HCT116 (cell line): ENCODE measurements at regions of chr18 and their contacts with region 1.

Region 1: DNA sequence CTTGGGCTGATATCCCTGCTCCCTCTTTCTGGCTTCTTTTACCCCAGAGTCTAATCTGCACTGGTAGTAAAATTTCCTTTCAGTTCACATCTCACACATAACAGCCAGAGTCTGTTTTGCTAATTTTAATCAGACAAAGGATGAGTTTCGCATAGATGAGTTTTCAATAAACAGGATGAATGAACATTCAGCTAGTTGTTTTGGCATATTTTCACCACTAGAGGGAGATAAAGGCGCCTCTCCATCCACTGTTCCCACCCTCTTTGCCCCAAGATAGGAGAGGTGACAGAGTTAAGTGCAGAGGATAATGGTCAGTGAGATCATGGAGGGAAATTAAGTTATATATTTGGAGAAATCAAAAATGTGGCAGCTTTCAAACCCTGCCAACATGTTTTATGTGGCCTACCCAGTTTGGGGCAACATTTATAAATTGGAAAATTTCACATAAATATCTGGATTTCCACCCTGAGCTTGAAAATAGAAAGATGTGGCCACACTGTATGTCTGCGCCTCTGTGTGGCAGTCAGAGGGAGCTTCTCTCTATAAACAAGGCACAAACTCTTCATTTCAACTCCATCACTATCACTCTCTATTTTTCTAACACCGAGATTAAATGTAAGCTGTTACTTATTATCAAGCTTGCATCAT is 48.5 kb upstream of the DTNA start:
- DNase-seq: peak; percentile 33
- ATAC-seq: peak; percentile 83
- H3K4me3 ChIP-seq: no peak overlapping the region
- H3K27ac ChIP-seq: no peak overlapping the region
- H3K4me1 ChIP-seq: peaks cover 9 to 14% of the 10 kb centered on the region in 2 experiments
- H3K27me3 ChIP-seq: no peaks in the 10 kb centered on the region
- CTCF ChIP-seq: peak; percentile 58 to 90 (median 83); a peak in 5 of 6 replicates
- POLR2A ChIP-seq: no peak
- RAD21 ChIP-seq: peak; percentile 62

Region 2: GRCh38 chr18:34647251-34647650 is 14.3 kb before region 1 on chr18:
- CTCF ChIA-PET with region 1: interaction called, 25 read pairs
- POLR2A ChIA-PET with region 1: no interaction called
- RAD21 ChIA-PET with region 1: no interaction called
- intact Hi-C with region 1: no loop called
- DNase-seq: peak; percentile 23
- ATAC-seq: peak; percentile 78
- H3K4me3 ChIP-seq: no peak overlapping the region
- H3K27ac ChIP-seq: no peak overlapping the region
- H3K4me1 ChIP-seq: peaks cover 5 to 22% of the 10 kb centered on the region in 2 experiments; a peak in 3 of 4 replicates
- H3K27me3 ChIP-seq: no peaks in the 10 kb centered on the region
- CTCF ChIP-seq: 0 out of 6 replicates have a peak, but pooled peaks of 1 of the 3 experiments have one; percentile 18
- POLR2A ChIP-seq: no peak
- RAD21 ChIP-seq: no peak

Region 3: DNA sequence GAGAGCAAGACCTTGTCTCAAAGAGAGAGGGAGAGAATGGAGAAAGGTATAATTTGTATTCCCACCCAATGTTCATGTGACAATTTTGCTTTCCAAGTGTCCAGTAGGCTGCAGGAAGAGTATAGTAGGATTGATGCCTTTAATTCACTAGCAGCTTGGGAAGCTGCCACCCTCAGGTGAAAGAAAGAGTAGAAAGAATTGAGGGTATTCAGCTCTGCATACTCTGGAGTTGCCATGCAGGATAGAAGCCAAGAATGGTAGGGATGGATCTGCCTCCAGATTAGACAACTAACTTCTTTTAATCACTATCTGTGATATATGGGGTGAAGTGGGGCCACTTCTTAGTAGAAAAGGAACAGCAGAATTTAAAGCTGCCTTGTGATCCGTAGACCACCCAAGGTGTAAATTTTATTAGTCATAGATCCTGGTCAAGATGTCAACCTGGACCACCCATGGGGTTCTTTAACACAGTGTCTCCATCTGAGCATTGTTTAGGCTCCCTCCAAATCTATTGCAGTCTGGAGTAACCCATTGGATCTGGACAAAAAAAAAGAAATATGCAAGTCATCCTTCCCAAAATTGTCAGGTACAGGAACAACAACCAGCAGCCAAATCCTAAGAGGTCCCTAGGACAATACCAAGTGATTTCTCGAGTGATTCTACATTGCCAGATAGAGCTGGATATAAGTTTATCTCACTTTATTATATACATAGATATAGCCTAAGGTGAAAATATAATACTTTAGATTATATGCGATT is 15.4 kb after region 1 on chr18:
- CTCF ChIA-PET with region 1: interaction called, 22 read pairs
- POLR2A ChIA-PET with region 1: no interaction called
- RAD21 ChIA-PET with region 1: no interaction called
- intact Hi-C with region 1: no loop called
- DNase-seq: no peak
- ATAC-seq: no peak
- H3K4me3 ChIP-seq: no peak overlapping the region
- H3K27ac ChIP-seq: no peak overlapping the region
- H3K4me1 ChIP-seq: no peaks in the 10 kb centered on the region
- H3K27me3 ChIP-seq: no peaks in the 10 kb centered on the region
- CTCF ChIP-seq: no peak
- POLR2A ChIP-seq: no peak
- RAD21 ChIP-seq: no peak

Region 4: DNA sequence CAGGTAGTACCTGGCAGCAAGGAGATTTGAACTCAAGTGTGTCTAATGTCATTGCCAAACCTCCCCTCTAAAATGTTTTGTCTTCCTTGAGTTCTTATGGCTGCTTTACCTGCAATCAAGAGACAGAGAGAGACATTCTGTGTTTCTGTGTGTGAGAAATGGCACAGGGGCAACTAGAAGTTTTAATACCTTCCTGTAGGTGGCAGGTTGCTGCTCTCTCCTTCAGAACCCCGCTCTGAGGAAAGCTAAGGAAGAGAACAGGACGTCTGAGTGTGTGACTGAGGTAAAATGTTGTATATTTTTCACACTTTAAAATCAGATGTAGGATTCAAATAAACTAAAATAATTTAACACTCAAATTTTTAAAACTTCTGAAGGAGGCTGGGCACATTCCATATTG is 67.7 kb after region 1 on chr18:
- CTCF ChIA-PET with region 1: interaction called, 12 read pairs
- POLR2A ChIA-PET with region 1: no interaction called
- RAD21 ChIA-PET with region 1: no interaction called
- intact Hi-C with region 1: no loop called
- DNase-seq: peak; percentile 29
- ATAC-seq: peak; percentile 98
- H3K4me3 ChIP-seq: no peak overlapping the region
- H3K27ac ChIP-seq: no peak overlapping the region
- H3K4me1 ChIP-seq: peaks cover 0 to 7% of the 10 kb centered on the region in 2 experiments; a peak in 1 of 4 replicates
- H3K27me3 ChIP-seq: no peaks in the 10 kb centered on the region
- CTCF ChIP-seq: peak; percentile 22 to 75 (median 72); a peak in 4 of 6 replicates
- POLR2A ChIP-seq: no peak
- RAD21 ChIP-seq: peak; percentile 25; the same call in 1 of the 2 replicates

Region 5: GRCh38 chr18:34787931-34788532 is 126.4 kb after region 1 on chr18:
- CTCF ChIA-PET with region 1: interaction called, 29 read pairs
- POLR2A ChIA-PET with region 1: no interaction called
- RAD21 ChIA-PET with region 1: interaction called in 1 of 2 experiments, 4 read pairs
- intact Hi-C with region 1: loop called (anchors 1 kb)
- DNase-seq: peak; percentile 59
- ATAC-seq: peak; percentile 87
- H3K4me3 ChIP-seq: no peak overlapping the region
- H3K27ac ChIP-seq: no peak overlapping the region
- H3K4me1 ChIP-seq: no peaks in the 10 kb centered on the region
- H3K27me3 ChIP-seq: no peaks in the 10 kb centered on the region
- CTCF ChIP-seq: peak; percentile 42 to 79 (median 64); a peak in 5 of 6 replicates
- POLR2A ChIP-seq: no peak
- RAD21 ChIP-seq: peak; percentile 79

Region 6: DNA sequence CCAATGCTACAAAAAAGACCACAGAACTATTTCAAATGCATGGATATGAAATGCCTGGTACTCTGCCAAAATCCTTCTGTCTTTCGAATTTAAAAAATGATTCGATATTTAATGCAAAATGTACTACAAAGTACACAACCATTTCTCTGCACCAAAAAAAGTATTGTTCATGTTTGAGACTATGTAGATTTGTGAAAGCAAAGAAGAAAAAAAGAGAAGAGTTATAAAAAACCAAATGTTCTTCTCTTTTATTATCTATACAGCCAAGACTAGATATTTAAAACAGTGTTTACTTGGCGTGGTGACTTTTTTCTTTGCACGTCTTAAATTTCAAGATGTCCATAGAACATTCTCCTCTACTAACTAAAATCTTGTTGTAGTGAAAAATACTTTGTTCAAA is 137.7 kb after region 1 on chr18:
- CTCF ChIA-PET with region 1: no interaction called
- POLR2A ChIA-PET with region 1: no interaction called
- RAD21 ChIA-PET with region 1: no interaction called
- intact Hi-C with region 1: no loop called
- DNase-seq: no peak
- ATAC-seq: no peak
- H3K4me3 ChIP-seq: no peak overlapping the region
- H3K27ac ChIP-seq: no peak overlapping the region
- H3K4me1 ChIP-seq: peaks cover 0 to 5% of the 10 kb centered on the region in 2 experiments; a peak in 1 of 4 replicates
- H3K27me3 ChIP-seq: no peaks in the 10 kb centered on the region
- CTCF ChIP-seq: no peak
- POLR2A ChIP-seq: no peak
- RAD21 ChIP-seq: no peak

Region 7: GRCh38 chr18:34809451-34810072 is 148.0 kb after region 1 on chr18:
- CTCF ChIA-PET with region 1: interaction called, 11 read pairs
- POLR2A ChIA-PET with region 1: no interaction called
- RAD21 ChIA-PET with region 1: no interaction called
- intact Hi-C with region 1: no loop called
- DNase-seq: peak; percentile 50
- ATAC-seq: peak; percentile 69
- H3K4me3 ChIP-seq: no peak overlapping the region
- H3K27ac ChIP-seq: no peak overlapping the region
- H3K4me1 ChIP-seq: peaks cover 7 to 25% of the 10 kb centered on the region in 2 experiments
- H3K27me3 ChIP-seq: no peaks in the 10 kb centered on the region
- CTCF ChIP-seq: peak; percentile 33 to 81 (median 72); a peak in 5 of 6 replicates
- POLR2A ChIP-seq: no peak
- RAD21 ChIP-seq: peak; percentile 42; the same call in 1 of the 2 replicates